Activated naive CD4-positive, alpha-beta T cell treated with anti-CD3 and anti-CD28 coated beads for 36 hours (primary cell): ENCODE measurements at regions of chr6 and their contacts with region 1.

Region 1: DNA sequence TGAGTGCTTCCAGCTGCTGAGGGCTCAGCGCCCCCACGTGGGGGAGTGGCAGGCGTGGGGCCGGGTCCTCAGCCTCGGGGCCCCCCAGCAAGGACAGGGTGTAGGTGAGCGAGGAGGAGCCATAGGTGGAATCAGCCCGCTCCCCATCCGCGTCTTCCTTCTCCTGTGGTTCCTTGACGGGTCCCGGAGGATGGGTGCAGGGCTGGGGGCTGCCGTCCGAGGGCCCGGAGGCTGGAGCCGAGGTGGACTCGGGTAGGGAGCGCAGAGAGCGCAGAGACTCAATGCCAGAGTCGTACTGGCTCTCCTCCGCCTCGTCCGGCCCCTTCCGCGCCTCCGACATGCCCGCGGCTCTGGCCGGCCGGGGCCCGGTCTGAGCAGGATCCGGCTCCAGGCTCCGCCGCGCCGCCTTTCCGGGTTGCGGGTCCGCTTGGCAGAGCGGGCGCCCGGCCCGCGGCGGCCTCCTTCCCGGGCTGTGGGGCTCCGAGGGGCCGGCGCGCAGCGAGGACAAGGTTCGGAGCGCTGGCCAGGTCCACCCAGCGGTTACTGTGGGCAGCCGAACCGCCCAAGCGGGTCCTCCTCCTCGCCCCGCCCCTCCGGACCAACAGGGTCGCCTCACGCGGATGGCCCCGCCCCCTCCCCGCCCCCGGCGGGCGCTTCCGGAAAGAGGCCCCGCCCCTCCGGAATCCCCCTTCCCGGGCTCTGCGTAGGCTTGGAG is at the start of gene NFKBIE:
- DNase-seq: peak; percentile 97
- H3K4me3 Mint-ChIP-seq: peak within 1 kb of the TSS; percentile 96
- H3K27ac Mint-ChIP-seq: peak within 1 kb of the TSS; percentile 95
- H3K4me1 Mint-ChIP-seq: peaks cover 55% of the 10 kb centered on the region
- H3K27me3 Mint-ChIP-seq: peaks cover 17% of the 10 kb centered on the region
- total RNA-seq, gene NFKBIE: 9.1 to 9.6 TPM

Region 2: DNA sequence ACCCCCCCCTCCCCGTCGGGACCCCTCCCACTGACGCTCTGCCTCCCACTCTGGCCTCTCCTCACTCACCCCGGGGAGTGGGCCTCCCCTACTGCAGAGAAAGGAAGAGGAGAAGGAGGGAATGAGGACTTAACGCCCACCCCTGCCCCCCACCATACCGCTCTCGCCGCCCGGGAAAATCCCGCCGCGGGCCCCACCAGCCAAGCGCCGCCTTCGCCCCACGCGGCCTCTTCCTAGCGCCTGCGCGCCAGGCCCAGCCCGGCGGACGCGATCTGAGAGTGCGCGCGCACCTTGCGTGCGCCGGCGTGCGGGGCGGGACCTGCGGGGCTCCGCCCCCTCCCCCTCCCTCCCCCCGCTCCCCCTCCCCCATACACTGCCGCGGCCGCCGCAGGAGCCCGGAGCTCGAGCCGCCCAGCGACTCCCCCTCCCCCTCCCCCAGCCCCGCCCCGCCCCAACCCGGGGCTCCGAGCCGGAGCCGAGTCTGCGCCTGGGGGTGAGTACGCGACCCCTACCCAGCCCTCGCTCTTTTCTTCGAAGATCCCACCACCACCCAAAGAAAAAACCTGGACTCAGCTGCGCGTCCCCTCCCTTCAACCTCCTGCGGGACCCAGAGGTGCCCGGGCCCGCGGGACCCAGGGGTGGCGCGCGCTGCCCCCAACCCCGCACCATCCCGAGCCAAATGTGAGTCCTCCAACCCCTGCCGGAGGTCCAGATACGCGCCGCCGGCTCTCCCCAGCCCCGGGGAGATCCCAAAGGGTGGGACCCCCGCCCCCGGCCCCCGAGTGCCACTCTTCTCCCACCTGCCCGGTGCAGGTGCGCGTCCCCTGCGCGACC is 137.8 kb before region 1 on chr6 and contains the starts of genes MRPL14 and TMEM63B:
- CTCF ChIA-PET with region 1: no interaction called
- intact Hi-C with region 1: loop called (anchors 1 kb)
- DNase-seq: peak; percentile 86
- H3K4me3 Mint-ChIP-seq: peak within 1 kb of the TSS; percentile 88
- H3K27ac Mint-ChIP-seq: peak within 1 kb of the TSS; percentile 93
- H3K4me1 Mint-ChIP-seq: peaks cover 41% of the 10 kb centered on the region
- H3K27me3 Mint-ChIP-seq: no peaks in the 10 kb centered on the region
- total RNA-seq, gene MRPL14: 40.9 to 41.0 TPM
- total RNA-seq, gene TMEM63B: 7.8 to 8.3 TPM

Region 3: DNA sequence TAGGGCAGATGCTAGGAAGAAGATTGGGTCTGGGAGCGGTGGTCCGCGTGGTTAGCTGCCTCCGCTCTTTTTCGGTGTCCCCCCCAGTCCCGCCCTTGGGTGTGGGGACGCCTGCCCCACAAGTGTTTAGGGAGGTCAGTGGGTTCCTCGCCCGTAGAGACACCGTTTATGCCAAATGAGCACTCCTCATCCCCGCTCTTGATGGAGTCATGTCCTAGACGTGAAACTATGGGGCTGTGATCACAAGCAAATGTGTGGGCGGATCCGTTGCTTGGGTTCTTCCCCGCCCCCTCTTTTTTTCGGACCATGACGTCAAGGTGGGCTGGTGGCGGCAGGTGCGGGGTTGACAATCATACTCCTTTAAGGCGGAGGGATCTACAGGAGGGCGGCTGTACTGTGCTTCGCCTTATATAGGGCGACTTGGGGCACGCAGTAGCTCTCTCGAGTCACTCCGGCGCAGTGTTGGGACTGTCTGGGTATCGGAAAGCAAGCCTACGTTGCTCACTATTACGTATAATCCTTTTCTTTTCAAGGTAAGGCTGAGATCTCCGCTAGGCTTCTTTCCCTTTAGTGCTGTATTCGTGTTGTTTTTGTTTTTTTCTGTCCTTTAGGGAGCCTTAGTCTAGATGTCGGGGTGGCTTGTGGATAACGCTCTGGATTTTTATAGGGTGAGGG is 18.4 kb before region 1 on chr6 and contains the start of gene HSP90AB1:
- CTCF ChIA-PET with region 1: interaction called, 9 read pairs
- intact Hi-C with region 1: loop called (anchors 1 kb)
- DNase-seq: peak; percentile 99
- H3K4me3 Mint-ChIP-seq: peak within 1 kb of the TSS; percentile 95
- H3K27ac Mint-ChIP-seq: peak within 1 kb of the TSS; percentile 97
- H3K4me1 Mint-ChIP-seq: peaks cover 46% of the 10 kb centered on the region
- H3K27me3 Mint-ChIP-seq: peaks cover 4% of the 10 kb centered on the region
- total RNA-seq, gene HSP90AB1: 1,951 to 2,044 TPM

Region 4: DNA sequence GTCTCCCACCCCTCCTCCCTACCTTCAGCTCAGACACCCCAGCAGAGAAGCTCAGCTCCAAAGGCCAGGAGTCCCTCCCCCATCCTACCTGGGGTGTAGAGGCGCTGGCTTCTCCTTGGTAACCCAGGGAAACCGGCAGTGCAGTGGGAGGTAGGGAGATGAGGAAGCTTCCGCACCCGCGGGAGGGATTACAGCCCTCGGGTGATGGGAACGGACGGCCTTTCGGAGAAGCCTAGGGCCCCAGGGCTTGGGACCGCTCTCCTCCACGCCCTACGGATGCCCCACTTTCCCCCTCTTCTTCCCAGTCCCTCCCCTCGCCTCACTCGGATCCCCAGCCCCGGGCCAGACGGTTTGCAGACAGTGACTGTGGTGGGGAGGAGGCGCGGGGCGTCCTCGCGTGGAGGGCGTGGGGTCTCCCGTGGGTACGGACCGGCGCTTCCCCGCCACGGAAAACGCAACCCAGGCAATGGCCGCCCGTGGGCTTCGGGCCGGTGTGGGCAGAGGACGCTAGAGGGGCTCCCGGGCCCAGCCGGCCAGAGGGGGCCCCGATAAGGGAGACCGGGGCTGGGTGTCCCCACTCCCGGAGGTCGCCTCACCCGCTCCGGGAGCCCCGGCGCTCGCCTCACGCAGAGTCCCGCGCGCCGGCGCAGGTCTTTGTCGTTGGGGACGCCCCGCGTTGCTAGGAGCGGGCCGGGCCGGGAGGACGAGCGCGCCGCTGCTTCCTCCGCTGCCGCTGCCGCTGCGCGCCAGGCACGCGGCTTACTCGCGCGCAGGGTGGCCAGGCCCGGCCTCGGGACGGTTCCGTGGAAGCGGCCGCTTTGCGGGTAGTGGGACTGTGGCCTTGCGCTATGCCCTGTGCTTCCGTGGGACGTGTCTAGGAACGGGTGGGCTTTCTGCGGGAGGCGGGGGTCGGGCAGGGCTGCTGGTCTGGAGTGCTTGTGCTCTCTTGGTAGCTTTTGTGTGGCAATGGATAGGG is 32.2 kb after region 1 on chr6:
- CTCF ChIA-PET with region 1: interaction called, 108 read pairs
- intact Hi-C with region 1: loop called (anchors 2 kb)
- DNase-seq: peak; percentile 71
- H3K4me3 Mint-ChIP-seq: peak overlapping the region; percentile 66
- H3K27ac Mint-ChIP-seq: no peak overlapping the region
- H3K4me1 Mint-ChIP-seq: peaks cover 11% of the 10 kb centered on the region
- H3K27me3 Mint-ChIP-seq: peaks cover 32% of the 10 kb centered on the region

Region 5: GRCh38 chr6:44338228-44339122 is 73.3 kb after region 1 on chr6:
- CTCF ChIA-PET with region 1: interaction called, 164 read pairs
- intact Hi-C with region 1: loop called (anchors 1 kb)
- DNase-seq: peak; percentile 81
- H3K4me3 Mint-ChIP-seq: no peak overlapping the region
- H3K27ac Mint-ChIP-seq: no peak overlapping the region
- H3K4me1 Mint-ChIP-seq: no peaks in the 10 kb centered on the region
- H3K27me3 Mint-ChIP-seq: peaks cover 24% of the 10 kb centered on the region

Region 6: GRCh38 chr6:44771647-44772415 is 506.7 kb after region 1 on chr6:
- CTCF ChIA-PET with region 1: no interaction called
- intact Hi-C with region 1: no loop called
- DNase-seq: no peak
- H3K4me3 Mint-ChIP-seq: no peak overlapping the region
- H3K27ac Mint-ChIP-seq: no peak overlapping the region
- H3K4me1 Mint-ChIP-seq: peaks cover 2% of the 10 kb centered on the region
- H3K27me3 Mint-ChIP-seq: no peaks in the 10 kb centered on the region

Region 7: GRCh38 chr6:44898296-44898930 is 633.2 kb after region 1 on chr6:
- CTCF ChIA-PET with region 1: no interaction called
- intact Hi-C with region 1: no loop called
- DNase-seq: no peak
- H3K4me3 Mint-ChIP-seq: no peak overlapping the region
- H3K27ac Mint-ChIP-seq: no peak overlapping the region
- H3K4me1 Mint-ChIP-seq: peaks cover 4% of the 10 kb centered on the region
- H3K27me3 Mint-ChIP-seq: no peaks in the 10 kb centered on the region